Gastrocnemius medialis (tissue), 4 donors: ENCODE measurements at regions of chr21 and their contacts with region 1.

Region 1: GRCh38 chr21:33199516-33200217 is 30.1 kb upstream of the IFNAR2 start:
- DNase-seq: peak; percentile 71 to 75
- ATAC-seq: peak; percentile 91 to 92
- H3K4me3 ChIP-seq: no peak overlapping the region
- H3K27ac ChIP-seq: peak overlapping the region; percentile 45 to 78 (median 70)
- H3K4me1 ChIP-seq: peaks cover 35 to 39% of the 10 kb centered on the region in 2 donors
- H3K27me3 ChIP-seq: no peaks in the 10 kb centered on the region
- CTCF ChIP-seq: peak; percentile 60 to 86 (median 77)
- POLR2A ChIP-seq: no peak

Region 2: DNA sequence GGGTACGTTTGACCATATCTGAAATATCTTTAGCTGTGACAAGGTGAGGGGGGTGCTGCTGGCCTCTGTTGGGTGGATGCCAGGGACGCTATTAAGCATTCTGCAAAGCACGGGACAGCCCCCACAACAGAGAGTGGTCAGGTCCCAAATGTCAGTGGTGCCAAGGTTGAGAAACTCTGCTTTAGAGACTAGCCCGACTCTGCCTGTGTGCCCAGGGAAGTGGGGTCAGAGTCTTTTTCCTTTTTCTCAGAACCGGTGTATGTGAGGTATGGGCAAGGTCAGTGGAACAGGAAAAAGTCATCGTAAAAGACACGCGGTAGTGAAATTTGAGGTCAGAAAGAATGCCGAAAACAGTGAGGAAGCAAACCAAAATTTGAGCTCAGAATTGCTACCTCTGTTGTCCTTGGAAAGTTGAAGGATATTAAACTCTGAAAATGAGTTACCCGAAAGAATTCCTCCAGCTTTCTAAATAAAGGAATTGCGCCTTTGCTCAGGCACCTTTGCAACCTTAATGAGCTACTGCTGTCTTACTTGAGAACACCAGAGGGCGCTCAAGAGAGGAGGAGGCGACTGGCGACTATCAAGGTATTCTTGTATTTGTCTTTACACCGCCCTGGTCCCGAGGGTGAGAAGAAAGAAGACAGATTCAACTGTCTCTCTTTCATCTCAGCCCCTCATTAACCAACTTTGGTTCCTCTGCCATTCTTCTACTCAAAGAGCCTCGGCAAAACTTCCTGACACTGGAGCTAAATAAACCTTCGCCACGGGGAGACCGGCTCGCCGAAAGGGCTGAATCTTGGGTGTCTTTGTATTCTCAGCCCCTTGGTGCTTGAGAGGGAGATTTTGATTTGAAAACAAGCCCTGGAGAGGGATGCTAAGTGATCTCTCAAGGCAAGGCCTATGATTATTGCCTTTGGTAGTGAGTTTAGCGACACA is 259.3 kb before region 1 on chr21:
- in situ Hi-C with region 1: loop called in 1 of 4 experiments (anchors 10 kb)
- intact Hi-C with region 1: loop called (anchors 1 kb)
- DNase-seq: no peak
- ATAC-seq: peak in 1 of 2 donors; percentile 33
- H3K4me3 ChIP-seq: no peak overlapping the region
- H3K27ac ChIP-seq: no peak overlapping the region
- H3K4me1 ChIP-seq: no peaks in the 10 kb centered on the region
- H3K27me3 ChIP-seq: peaks cover 0 to 2% (median 0%) of the 10 kb centered on the region in 3 donors
- CTCF ChIP-seq: peak; percentile 34 to 77 (median 59)
- POLR2A ChIP-seq: no peak

Region 3: GRCh38 chr21:33266050-33266788 is 66.6 kb after region 1 on chr21 and contains the start of gene IL10RB:
- in situ Hi-C with region 1: no loop called
- intact Hi-C with region 1: loop called (anchors 2 kb)
- DNase-seq: peak; percentile 32 to 47
- ATAC-seq: peak; percentile 80
- H3K4me3 ChIP-seq: peak within 1 kb of the TSS; percentile 73 to 91 (median 86)
- H3K27ac ChIP-seq: peak within 1 kb of the TSS; percentile 82 to 84 (median 83)
- H3K4me1 ChIP-seq: peaks cover 17 to 28% of the 10 kb centered on the region in 2 donors
- H3K27me3 ChIP-seq: no peaks in the 10 kb centered on the region
- CTCF ChIP-seq: no peak
- POLR2A ChIP-seq: peak; percentile 45 to 53
- total RNA-seq, gene IL10RB: 11.4 to 17.1 (median 14.0) TPM

Region 4: GRCh38 chr21:33374450-33375096 is 174.9 kb after region 1 on chr21:
- in situ Hi-C with region 1: loop called in 3 of 4 experiments (anchors 10 kb)
- intact Hi-C with region 1: loop called (anchors 5 kb)
- DNase-seq: no peak
- ATAC-seq: peak in 1 of 2 donors; percentile 30
- H3K4me3 ChIP-seq: no peak overlapping the region
- H3K27ac ChIP-seq: no peak overlapping the region
- H3K4me1 ChIP-seq: peaks cover 6 to 14% of the 10 kb centered on the region in 2 donors
- H3K27me3 ChIP-seq: no peaks in the 10 kb centered on the region
- CTCF ChIP-seq: peak in 4 of 5 experiments; percentile 19 to 62 (median 42)
- POLR2A ChIP-seq: no peak

Region 5: GRCh38 chr21:33449616-33450015 is 249.9 kb after region 1 on chr21:
- in situ Hi-C with region 1: loop called (anchors 5 to 10 kb)
- intact Hi-C with region 1: loop called (anchors 1 kb)
- DNase-seq: no peak
- ATAC-seq: no peak
- H3K4me3 ChIP-seq: no peak overlapping the region
- H3K27ac ChIP-seq: no peak overlapping the region
- H3K4me1 ChIP-seq: no peaks in the 10 kb centered on the region
- H3K27me3 ChIP-seq: no peaks in the 10 kb centered on the region
- CTCF ChIP-seq: no peak
- POLR2A ChIP-seq: no peak